ENCODE measurements at regions of chr10 and their contacts with region 1.

Region 1: DNA sequence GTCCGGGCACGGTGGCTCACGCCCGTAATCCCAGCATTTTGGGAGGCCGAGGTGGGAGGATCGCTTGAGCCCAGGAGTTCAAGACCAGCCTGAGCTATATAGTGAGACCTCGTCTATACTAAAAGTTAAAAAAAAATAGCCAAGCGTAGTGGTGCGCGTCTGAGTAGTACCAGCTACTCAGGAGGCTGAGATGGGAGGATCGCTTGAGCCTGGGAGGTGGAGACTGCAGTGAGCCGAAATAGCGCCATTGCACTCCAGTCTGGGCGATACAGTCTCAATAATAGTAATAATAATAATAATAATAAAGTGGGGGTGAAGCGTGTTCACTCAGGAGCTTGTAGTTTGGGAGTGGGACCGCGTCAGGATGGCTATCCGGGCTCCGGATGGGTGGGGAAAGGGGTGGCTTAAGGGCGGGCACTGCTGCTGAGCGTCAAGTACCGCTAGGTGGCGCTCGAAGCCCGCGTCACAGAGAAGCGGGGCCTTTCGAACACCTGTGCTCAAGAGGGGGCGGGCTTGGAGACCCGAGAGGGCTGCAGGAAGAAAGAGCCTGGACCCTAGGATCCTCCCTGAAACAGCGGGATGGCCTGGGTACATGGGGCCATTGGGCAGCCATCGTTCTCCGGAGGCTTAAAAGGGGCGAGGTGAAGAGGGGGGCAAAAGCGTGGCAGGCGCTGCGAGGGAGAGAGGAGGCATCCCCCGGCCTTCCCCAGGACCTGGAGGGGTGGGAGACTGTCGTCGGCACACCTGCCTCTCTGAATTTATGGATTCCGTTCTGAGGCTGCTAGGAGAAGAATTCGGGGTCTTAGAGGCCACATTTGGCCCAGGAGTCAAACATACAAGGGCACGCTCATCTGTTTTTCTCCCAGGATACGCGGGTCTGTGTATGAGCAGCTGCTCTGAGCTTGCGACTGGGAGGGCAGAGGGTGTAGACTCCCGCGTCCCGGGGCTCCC is 14.5 kb downstream of the LBX1 start:
- DNase-seq: peak in 2 of 3 donors; percentile 19 to 44
- H3K4me3 ChIP-seq: peak overlapping the region in 1 of 3 experiments; percentile 64
- H3K4me3 Mint-ChIP-seq: peak overlapping the region in 1 of 2 donors; percentile 84
- H3K27ac ChIP-seq: no peak overlapping the region
- H3K27ac Mint-ChIP-seq: no peak overlapping the region
- H3K4me1 ChIP-seq: peaks cover 11 to 18% of the 10 kb centered on the region in 2 donors
- H3K4me1 Mint-ChIP-seq: peaks cover 26% of the 10 kb centered on the region
- H3K27me3 ChIP-seq: peaks cover 62 to 95% of the 10 kb centered on the region in 2 donors
- H3K27me3 Mint-ChIP-seq: peaks cover 93 to 99% (median 97%) of the 10 kb centered on the region in 3 donors
- CTCF ChIP-seq: peak; percentile 93

Region 2: DNA sequence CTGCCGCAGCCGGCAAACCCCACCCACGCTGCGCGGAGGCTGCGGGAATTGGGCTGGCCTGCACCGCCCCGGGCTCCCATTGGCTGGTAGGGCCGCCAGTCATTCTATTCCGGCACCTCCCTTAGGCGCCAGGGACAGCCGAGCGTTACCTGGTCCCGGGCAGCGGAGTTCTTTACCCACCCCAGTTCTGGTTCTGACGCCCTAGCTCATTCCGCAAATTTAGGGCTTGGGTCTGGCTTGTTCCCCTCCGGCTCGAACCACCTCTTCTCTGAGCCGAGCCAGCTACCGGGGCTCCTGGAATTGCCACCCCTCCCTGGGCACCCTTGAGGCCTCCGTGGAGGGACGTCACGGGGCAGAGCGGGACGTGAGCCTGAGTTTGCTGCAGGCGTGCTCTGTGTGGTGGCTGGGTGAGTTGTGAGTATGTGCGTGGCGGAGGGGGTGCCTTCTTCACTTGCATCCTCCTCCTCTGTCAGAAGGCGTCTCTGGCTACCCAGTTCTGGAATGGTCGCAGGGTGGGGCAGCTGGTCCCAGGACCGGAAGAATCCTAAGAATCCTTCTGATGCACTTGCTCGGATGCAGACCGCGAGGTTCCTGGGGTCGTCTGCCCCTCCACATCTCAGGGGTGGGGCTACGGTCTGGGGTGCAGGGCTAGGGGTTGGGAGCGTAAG is 183.5 kb before region 1 on chr10 and contains the starts of genes PDZD7 and SFXN3:
- intact Hi-C with region 1: no loop called
- DNase-seq: peak; percentile 90 to 92 (median 91)
- H3K4me3 ChIP-seq: peak within 1 kb of the TSS; percentile 58 to 96 (median 66)
- H3K4me3 Mint-ChIP-seq: peak within 1 kb of the TSS; percentile 98 to 99
- H3K27ac ChIP-seq: peak within 1 kb of the TSS; percentile 90 to 100
- H3K27ac Mint-ChIP-seq: peak within 1 kb of the TSS; percentile 97 to 100 (median 99)
- H3K4me1 ChIP-seq: peaks cover 44 to 61% of the 10 kb centered on the region in 2 donors
- H3K4me1 Mint-ChIP-seq: peaks cover 57% of the 10 kb centered on the region
- H3K27me3 ChIP-seq: no peaks in the 10 kb centered on the region
- H3K27me3 Mint-ChIP-seq: peaks cover 2 to 10% (median 6%) of the 10 kb centered on the region in 3 donors
- CTCF ChIP-seq: no peak
- polyA plus RNA-seq, gene PDZD7: 0.73 TPM in 1 of 3 donors, not detected in the others
- polyA plus RNA-seq, gene SFXN3: 21.3 to 152 (median 24.2) TPM

Region 3: DNA sequence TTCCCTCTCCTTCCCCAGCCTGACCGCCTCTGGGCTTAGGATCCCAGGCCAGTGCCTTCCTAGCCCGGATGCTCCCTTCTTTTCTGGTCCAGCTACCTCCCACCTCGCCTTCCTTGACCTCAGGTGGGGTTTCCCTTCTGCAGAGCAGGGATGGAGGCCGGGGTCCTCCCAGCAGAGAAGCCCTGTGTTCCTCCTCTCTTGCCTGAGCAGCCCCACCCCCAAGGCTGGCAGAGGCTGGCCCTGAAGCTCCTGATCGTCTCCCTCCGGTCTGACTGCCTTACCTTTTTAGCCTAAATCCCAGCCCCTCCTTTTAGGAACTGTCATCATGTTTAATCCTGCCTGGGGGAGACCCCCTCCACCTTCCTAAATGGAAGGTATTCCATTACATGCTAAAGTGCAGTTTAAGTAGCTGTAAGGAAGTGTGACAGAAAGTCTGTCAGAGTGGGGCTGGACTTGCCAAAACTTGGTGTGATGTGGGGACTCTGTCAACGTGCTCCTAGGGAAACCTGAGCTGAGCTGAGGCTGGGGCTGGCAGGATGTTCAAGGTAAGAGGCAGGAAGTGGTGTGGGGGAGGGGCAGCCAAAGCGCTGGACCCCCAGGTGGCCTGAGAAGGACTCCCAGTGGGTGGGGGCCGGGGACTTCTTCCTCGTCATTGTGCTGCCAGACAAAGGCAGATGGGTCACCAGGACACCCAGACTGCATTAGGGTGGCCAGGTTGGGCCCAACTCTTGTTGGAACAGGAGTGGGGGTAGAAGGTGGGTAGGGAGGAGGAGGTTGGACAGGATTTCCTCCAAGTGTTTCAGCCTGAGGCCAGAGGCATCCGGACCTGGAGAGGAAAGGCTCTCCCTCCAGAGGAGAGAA is 24.9 kb before region 1 on chr10:
- intact Hi-C with region 1: no loop called
- DNase-seq: no peak
- H3K4me3 ChIP-seq: no peak overlapping the region
- H3K4me3 Mint-ChIP-seq: no peak overlapping the region
- H3K27ac ChIP-seq: no peak overlapping the region
- H3K27ac Mint-ChIP-seq: peak overlapping the region in 1 of 7 donors; percentile 23
- H3K4me1 ChIP-seq: no peaks in the 10 kb centered on the region
- H3K4me1 Mint-ChIP-seq: no peaks in the 10 kb centered on the region
- H3K27me3 ChIP-seq: peaks cover 0 to 7% of the 10 kb centered on the region in 2 donors
- H3K27me3 Mint-ChIP-seq: peaks cover 11 to 22% (median 14%) of the 10 kb centered on the region in 3 donors
- CTCF ChIP-seq: no peak

Region 4: DNA sequence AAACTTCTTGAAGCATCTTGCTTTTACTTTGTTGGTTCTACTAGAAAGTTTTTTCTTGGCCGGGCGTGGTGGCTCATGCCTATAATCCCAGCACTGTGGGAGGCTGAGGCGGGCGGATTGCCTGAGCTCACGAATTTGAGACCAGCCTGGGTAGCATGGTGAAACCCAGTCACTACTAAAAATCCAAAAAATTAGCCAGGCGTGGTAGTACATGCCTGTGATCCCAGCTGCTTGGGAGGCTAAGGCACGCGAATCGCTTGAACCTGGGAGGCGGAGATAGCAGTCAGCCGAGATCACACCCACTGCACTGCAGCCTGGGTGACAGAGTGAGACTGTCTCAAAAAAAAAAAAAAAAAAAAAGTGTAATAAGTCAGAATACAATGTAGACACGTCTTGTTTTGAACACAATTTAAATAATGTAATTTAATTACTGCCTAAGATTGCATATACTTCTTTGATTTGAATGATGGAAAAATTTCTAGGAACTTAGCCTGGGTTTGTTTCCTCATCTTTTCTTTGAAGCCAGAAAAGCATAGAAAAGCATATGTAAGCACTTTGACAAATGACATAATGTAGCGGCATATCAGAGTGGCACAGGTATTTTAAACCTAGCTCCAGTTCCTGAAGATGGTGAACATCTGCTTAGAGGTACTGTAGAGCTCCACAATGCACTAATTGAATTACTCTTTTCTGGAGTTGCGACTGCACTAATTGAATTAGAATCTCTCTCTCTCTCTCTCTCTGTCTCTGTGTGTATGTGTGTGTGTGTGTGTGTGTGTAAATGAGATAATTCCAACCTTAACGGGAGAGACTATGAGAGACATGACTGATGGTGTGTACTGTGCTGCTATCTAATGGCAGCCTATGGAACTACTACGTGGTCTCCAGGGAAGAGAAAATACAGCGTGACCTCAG is 227.1 kb after region 1 on chr10:
- intact Hi-C with region 1: loop called in 1 of 2 experiments (anchors 10 kb)
- DNase-seq: peak in 2 of 3 donors; percentile 6
- H3K4me3 ChIP-seq: no peak overlapping the region
- H3K4me3 Mint-ChIP-seq: no peak overlapping the region
- H3K27ac ChIP-seq: no peak overlapping the region
- H3K27ac Mint-ChIP-seq: no peak overlapping the region
- H3K4me1 ChIP-seq: no peaks in the 10 kb centered on the region
- H3K4me1 Mint-ChIP-seq: peaks cover 3% of the 10 kb centered on the region
- H3K27me3 ChIP-seq: no peaks in the 10 kb centered on the region
- H3K27me3 Mint-ChIP-seq: no peaks in the 10 kb centered on the region
- CTCF ChIP-seq: peak; percentile 33

Region 5: GRCh38 chr10:101569838-101570766 is 355.4 kb after region 1 on chr10:
- intact Hi-C with region 1: loop called (anchors 5 kb)
- DNase-seq: peak; percentile 63 to 74 (median 66)
- H3K4me3 ChIP-seq: peak overlapping the region; percentile 67 to 96 (median 78)
- H3K4me3 Mint-ChIP-seq: peak overlapping the region; percentile 86 to 91
- H3K27ac ChIP-seq: peak overlapping the region in 1 of 2 donors; percentile 68
- H3K27ac Mint-ChIP-seq: peak overlapping the region in 4 of 7 donors; percentile 19 to 54 (median 44)
- H3K4me1 ChIP-seq: peaks cover 17 to 25% of the 10 kb centered on the region in 2 donors
- H3K4me1 Mint-ChIP-seq: peaks cover 22% of the 10 kb centered on the region
- H3K27me3 ChIP-seq: peaks cover 38 to 48% of the 10 kb centered on the region in 2 donors
- H3K27me3 Mint-ChIP-seq: peaks cover 48 to 53% (median 50%) of the 10 kb centered on the region in 3 donors
- CTCF ChIP-seq: peak; percentile 95

Measured in CD14-positive monocyte (primary cell).